ENCODE measurements at regions of chr5 and their contacts with region 1.

Region 1: GRCh38 chr5:82174128-82174918 is 103.8 kb downstream of the RPS23 start:
- DNase-seq: peak; percentile 30 to 70 (median 55)
- ATAC-seq: peak; percentile 70
- H3K4me3 ChIP-seq: no peak overlapping the region
- H3K4me3 Mint-ChIP-seq: no peak overlapping the region
- H3K27ac ChIP-seq: no peak overlapping the region
- H3K27ac Mint-ChIP-seq: peak overlapping the region; percentile 19
- H3K4me1 ChIP-seq: no peaks in the 10 kb centered on the region
- H3K4me1 Mint-ChIP-seq: peaks cover 6% of the 10 kb centered on the region
- H3K27me3 ChIP-seq: no peaks in the 10 kb centered on the region
- H3K27me3 Mint-ChIP-seq: no peaks in the 10 kb centered on the region
- CTCF ChIP-seq: peak; percentile 60

Region 2: DNA sequence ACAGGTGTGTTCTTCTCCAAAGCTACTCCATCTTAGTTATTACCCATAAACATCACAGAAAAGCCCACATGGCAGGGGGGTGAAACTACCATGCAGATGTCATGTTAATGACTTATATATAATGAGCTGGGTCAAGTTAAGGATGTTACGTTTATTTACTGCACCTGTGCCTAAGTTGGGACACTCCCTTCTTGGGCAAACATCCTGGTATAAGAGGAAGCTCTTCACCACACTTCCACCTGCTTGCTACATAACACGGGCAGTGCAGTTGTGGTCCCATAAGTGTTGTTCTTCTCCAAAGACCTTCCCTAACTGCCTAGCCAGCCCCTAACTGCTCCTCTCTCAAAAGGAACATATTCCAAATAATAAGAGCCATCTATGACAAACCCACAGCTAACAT is 882.2 kb before region 1 on chr5:
- CTCF ChIA-PET with region 1: no interaction called
- POLR2A ChIA-PET with region 1: no interaction called
- intact Hi-C with region 1: no loop called
- DNase-seq: no peak
- ATAC-seq: no peak
- H3K4me3 ChIP-seq: no peak overlapping the region
- H3K4me3 Mint-ChIP-seq: no peak overlapping the region
- H3K27ac ChIP-seq: no peak overlapping the region
- H3K27ac Mint-ChIP-seq: no peak overlapping the region
- H3K4me1 ChIP-seq: peaks cover 7% of the 10 kb centered on the region
- H3K4me1 Mint-ChIP-seq: peaks cover 55% of the 10 kb centered on the region
- H3K27me3 ChIP-seq: no peaks in the 10 kb centered on the region
- H3K27me3 Mint-ChIP-seq: no peaks in the 10 kb centered on the region
- CTCF ChIP-seq: no peak

Region 3: GRCh38 chr5:83564069-83564749 is 1389.9 kb after region 1 on chr5:
- CTCF ChIA-PET with region 1: no interaction called
- POLR2A ChIA-PET with region 1: no interaction called
- intact Hi-C with region 1: loop called in 1 of 2 experiments (anchors 5 kb)
- DNase-seq: peak in 2 of 9 experiments; percentile 30 to 50
- ATAC-seq: no peak
- H3K4me3 ChIP-seq: no peak overlapping the region
- H3K4me3 Mint-ChIP-seq: no peak overlapping the region
- H3K27ac ChIP-seq: no peak overlapping the region
- H3K27ac Mint-ChIP-seq: no peak overlapping the region
- H3K4me1 ChIP-seq: no peaks in the 10 kb centered on the region
- H3K4me1 Mint-ChIP-seq: no peaks in the 10 kb centered on the region
- H3K27me3 ChIP-seq: peaks cover 0 to 2% of the 10 kb centered on the region in 2 experiments
- H3K27me3 Mint-ChIP-seq: no peaks in the 10 kb centered on the region
- CTCF ChIP-seq: peak; percentile 76

Measured in CD8-positive, alpha-beta T cell (primary cell).